Common myeloid progenitor, CD34-positive (primary cell): ENCODE measurements at regions of chr20 and their contacts with region 1.

Region 1: GRCh38 chr20:31822421-31823330 is 3.5 kb downstream of the MYLK2 start:
- DNase-seq: peak; percentile 69 to 87 (median 81)
- H3K4me3 ChIP-seq: peak overlapping the region in 3 of 7 experiments; percentile 32 to 48 (median 43)
- H3K27ac ChIP-seq: no peak overlapping the region
- H3K4me1 ChIP-seq: peaks cover 0 to 26% (median 19%) of the 10 kb centered on the region in 4 experiments
- H3K27me3 ChIP-seq: no peaks in the 10 kb centered on the region

Region 2: DNA sequence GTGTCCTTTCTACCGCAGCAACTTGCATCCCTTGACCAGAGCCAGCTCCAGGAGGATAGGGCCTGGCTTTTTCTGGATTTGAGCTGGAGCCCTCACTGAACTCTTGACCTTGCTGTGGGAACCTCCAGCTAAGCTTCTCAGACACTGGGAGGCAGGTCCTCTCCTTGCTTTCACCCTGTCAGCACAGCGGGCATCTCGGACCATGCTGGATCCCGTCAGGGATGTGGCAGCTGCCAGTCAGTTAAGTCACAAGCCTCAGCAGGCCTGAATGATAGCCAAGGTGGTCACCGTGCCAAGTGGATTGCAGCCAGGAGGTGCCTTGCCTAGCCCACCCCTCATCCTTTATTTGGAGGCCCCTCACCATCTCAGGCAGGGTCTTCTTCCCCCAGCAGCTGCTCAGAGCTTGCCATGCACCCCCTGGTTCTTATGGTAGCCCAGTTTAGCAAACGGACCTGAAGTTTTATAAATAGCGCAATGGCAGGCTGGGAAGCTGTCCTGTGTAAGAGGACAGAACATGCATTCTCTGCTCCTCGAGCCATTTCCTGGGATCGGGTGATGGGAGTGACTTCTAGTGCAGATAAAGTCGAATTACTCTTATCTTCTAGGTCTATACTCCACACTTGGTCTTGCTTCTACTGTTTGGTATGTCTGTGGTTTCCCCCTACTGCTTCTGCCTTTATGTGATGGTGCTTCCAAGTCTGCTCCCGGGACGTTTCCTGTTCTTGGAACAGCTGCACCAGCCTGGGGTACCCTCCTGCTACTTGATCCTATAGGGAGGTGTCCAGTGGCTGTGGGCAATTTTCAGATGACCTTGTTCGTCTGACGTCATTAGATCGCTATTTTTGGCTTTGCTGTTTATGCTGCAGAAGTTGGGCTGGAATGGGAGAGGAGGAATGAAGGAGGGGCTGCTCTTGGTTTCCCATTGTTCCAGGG is 10.6 kb before region 1 on chr20:
- CTCF ChIA-PET with region 1: interaction called, 12 read pairs
- POLR2A ChIA-PET with region 1: no interaction called
- DNase-seq: peak in 1 of 3 donors; percentile 13
- H3K4me3 ChIP-seq: no peak overlapping the region
- H3K27ac ChIP-seq: no peak overlapping the region
- H3K4me1 ChIP-seq: peaks cover 0 to 15% (median 10%) of the 10 kb centered on the region in 4 experiments
- H3K27me3 ChIP-seq: no peaks in the 10 kb centered on the region

Region 3: DNA sequence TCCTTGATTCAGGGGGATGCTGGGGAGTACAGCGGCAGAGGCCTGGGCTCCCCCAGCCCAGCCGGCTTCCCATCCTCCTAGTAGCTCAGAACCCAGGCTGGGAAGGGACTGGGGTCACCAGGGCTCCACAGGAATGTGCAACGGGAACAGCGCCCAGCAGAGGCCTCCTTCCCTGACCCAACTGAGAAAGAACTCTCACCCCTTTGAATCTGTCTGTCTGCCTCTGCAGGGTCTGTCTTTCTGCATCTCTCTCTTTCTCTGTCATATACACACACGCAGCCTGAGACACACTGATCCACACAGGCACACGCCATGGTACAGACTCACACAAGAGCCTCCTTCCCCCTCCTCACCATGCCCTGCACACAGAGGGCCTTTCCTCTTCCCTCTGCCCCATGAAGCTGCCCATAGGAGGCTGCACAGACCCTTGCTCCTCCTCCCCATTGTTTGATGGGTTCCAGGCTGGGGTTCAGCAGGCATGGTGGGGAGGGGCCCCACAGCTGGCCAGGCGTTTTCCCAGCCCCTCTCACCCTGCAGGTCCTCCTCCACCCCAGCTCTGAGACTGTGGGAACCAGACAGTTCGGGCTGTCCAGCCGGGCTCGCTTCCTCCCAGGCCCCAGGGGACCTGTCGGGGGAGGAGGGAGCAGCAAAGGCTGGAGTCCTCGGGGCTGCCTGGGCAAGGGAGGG is 19.9 kb after region 1 on chr20:
- CTCF ChIA-PET with region 1: interaction called, 131 read pairs
- POLR2A ChIA-PET with region 1: no interaction called
- DNase-seq: no peak
- H3K4me3 ChIP-seq: no peak overlapping the region
- H3K27ac ChIP-seq: no peak overlapping the region
- H3K4me1 ChIP-seq: peaks cover 0 to 23% (median 14%) of the 10 kb centered on the region in 4 experiments
- H3K27me3 ChIP-seq: no peaks in the 10 kb centered on the region

Region 4: GRCh38 chr20:31951530-31952453 is 129.1 kb after region 1 on chr20 and contains the start of gene PDRG1:
- CTCF ChIA-PET with region 1: interaction called, 16 read pairs
- POLR2A ChIA-PET with region 1: no interaction called
- DNase-seq: peak; percentile 93 to 97 (median 97)
- H3K4me3 ChIP-seq: peak within 1 kb of the TSS; percentile 72 to 98 (median 91)
- H3K27ac ChIP-seq: peak within 1 kb of the TSS; percentile 90 to 93
- H3K4me1 ChIP-seq: peaks cover 0 to 18% (median 12%) of the 10 kb centered on the region in 4 experiments
- H3K27me3 ChIP-seq: peaks cover 0 to 17% (median 0%) of the 10 kb centered on the region in 5 experiments